Activated CD8-positive, alpha-beta T cell treated with anti-CD3 and anti-CD28 coated beads, Interleukin-2, amount 10 ng/mL, durations not matched to agents 7 days and 5 days (primary cell): ENCODE measurements at regions of chr15 and their contacts with region 1.

Region 1: DNA sequence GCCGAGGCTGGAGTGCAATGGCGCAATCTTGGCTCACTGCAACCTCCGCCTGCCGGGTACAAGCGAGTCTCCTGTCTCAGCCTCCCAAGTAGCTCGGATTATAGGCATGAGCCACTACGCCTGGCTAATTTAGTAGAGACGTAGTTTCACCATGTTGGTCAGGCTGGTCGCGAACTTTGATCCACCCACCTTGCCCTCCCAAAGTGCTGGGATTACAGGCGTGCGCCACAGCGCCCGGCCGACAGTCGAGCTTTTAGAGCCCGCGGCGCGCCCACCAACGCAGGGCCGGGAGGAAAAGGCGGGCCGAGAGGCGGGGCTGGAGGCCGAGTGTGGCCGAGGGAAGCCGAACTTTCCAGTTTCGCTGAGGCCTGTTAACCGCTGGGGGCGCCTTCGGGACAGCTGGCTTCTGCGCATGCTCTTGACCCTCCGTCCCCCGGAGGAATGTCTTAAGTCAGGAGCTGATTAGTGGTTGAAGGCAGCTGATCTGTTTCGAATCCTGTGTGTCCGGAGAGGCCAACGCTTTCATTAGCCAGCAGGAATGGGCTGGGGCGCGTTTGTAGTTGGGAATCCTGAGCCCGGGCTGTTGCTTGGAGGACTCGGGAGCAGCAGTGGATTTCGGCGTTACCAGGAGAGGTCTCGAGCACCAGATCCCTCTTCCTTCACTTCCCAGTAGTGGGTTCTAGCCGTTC is 10.0 kb downstream of the RPLP1 start:
- DNase-seq: peak; percentile 95
- ATAC-seq: peak; percentile 91
- H3K4me3 Mint-ChIP-seq: peak overlapping the region; percentile 74
- H3K27ac Mint-ChIP-seq: peak overlapping the region; percentile 72
- H3K4me1 Mint-ChIP-seq: peaks cover 34% of the 10 kb centered on the region
- H3K27me3 Mint-ChIP-seq: peaks cover 14% of the 10 kb centered on the region

Region 2: DNA sequence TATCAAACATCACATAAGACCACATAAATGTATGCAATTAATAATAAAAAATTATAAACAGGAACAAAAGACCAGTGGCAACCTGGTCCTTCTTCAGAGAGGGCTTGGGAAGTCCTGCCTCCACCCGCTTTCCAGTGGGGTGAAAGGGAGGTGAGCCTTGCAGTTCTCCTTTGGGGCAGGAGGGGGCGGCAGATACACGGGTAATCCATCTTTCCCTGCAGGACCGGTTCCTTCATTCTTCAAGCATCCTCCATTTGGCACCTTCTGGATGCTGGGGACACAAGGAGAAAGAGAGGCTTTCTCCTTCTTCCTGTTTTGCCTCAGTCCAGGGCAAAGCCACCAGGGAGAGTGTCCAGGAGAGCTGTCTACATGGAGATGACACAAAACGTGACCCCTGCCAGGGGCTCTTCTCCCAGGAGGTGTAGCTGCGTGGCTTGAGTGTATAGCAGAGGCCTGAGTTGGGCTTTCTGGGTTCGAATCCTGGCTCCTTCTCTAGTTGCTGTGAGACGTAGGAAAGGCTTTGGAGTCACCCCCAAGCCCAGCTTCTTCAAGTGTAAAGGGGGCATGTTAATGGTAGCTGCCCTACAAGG is 13.2 kb after region 1 on chr15:
- CTCF ChIA-PET with region 1: interaction called, 23 read pairs
- POLR2A ChIA-PET with region 1: no interaction called
- DNase-seq: peak; percentile 79
- ATAC-seq: peak; percentile 74
- H3K4me3 Mint-ChIP-seq: no peak overlapping the region
- H3K27ac Mint-ChIP-seq: no peak overlapping the region
- H3K4me1 Mint-ChIP-seq: peaks cover 4% of the 10 kb centered on the region
- H3K27me3 Mint-ChIP-seq: peaks cover 34% of the 10 kb centered on the region

Region 3: GRCh38 chr15:70097337-70098169 is 634.9 kb after region 1 on chr15 and contains the start of gene TLE3:
- CTCF ChIA-PET with region 1: interaction called, 9 read pairs
- POLR2A ChIA-PET with region 1: interaction called, 14 read pairs
- DNase-seq: peak; percentile 99
- ATAC-seq: peak; percentile 66
- H3K4me3 Mint-ChIP-seq: peak within 1 kb of the TSS; percentile 97
- H3K27ac Mint-ChIP-seq: peak within 1 kb of the TSS; percentile 98
- H3K4me1 Mint-ChIP-seq: peaks cover 63% of the 10 kb centered on the region
- H3K27me3 Mint-ChIP-seq: peaks cover 4% of the 10 kb centered on the region
- total RNA-seq, gene TLE3: 64.0 to 71.1 TPM